ENCODE measurements at regions of chr10 and their contacts with region 1.

Region 1: DNA sequence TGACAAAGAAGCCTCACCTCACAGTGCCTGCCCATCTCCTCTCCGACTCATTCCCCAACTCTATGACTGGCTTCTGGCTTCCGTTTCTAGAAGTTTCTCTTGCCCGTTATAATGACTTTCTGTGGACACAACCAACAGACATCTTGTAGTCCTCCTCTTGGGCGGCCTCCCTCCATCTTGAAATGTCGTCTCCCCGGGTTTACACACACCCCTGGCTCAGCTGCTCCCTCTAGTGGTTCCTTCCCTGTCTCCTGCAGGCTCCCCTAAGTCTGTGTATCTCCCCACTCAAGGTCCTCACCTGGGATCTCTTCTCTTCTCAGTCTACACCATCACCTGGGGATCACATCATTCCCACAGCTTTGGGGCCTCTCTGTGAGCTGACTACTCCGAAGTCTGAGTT is 123.4 kb upstream of the NEBL start:
- DNase-seq: no peak
- ATAC-seq: no peak
- H3K4me3 ChIP-seq: no peak overlapping the region
- H3K27ac ChIP-seq: no peak overlapping the region
- H3K4me1 ChIP-seq: no peaks in the 10 kb centered on the region
- H3K27me3 ChIP-seq: no peaks in the 10 kb centered on the region
- CTCF ChIP-seq: peak; percentile 72

Region 2: DNA sequence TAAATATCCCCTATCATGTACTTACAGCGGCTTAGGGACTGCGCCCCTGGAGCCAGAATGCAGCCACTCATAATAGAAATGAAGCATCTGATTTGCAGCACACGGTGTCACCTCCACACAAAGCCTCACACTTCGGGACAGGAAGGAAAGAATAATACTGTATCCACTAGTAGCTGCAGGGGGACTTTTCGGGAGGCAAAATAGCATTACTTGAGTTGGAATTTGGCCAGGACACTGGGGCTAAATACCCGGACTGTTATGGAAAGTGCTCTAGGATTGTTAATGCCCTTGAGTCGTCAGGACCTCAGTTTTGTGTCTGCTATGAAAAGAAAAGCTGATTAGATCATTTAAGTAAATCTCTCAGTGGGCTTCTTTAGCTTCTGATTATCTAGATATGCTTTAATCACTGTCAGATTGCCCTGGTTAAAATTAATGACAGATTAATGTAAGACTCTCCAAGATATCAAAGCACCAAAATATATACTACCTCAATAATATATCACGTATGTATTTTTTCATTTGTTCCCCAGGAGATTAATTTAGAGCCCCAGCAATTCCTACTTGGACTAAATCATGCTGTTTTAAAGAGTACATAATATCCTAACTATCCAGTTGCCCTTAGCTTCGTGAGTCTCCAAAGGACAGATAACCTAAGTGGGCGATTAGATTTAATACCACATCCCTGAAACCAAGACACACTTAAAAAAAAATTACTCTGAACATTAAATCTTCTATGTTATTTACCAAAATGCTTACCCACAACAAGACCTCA is 49.6 kb after region 1 on chr10:
- CTCF ChIA-PET with region 1: no interaction called
- POLR2A ChIA-PET with region 1: interaction called, 11 read pairs
- in situ Hi-C with region 1: no loop called
- intact Hi-C with region 1: no loop called
- DNase-seq: no peak
- ATAC-seq: no peak
- H3K4me3 ChIP-seq: no peak overlapping the region
- H3K27ac ChIP-seq: no peak overlapping the region
- H3K4me1 ChIP-seq: no peaks in the 10 kb centered on the region; the same call in 1 of the 2 replicates
- H3K27me3 ChIP-seq: no peaks in the 10 kb centered on the region
- CTCF ChIP-seq: no peak